Naive thymus-derived CD4-positive, alpha-beta T cell (primary cell): ENCODE measurements at regions of chr10 and their contacts with region 1.

Region 1: DNA sequence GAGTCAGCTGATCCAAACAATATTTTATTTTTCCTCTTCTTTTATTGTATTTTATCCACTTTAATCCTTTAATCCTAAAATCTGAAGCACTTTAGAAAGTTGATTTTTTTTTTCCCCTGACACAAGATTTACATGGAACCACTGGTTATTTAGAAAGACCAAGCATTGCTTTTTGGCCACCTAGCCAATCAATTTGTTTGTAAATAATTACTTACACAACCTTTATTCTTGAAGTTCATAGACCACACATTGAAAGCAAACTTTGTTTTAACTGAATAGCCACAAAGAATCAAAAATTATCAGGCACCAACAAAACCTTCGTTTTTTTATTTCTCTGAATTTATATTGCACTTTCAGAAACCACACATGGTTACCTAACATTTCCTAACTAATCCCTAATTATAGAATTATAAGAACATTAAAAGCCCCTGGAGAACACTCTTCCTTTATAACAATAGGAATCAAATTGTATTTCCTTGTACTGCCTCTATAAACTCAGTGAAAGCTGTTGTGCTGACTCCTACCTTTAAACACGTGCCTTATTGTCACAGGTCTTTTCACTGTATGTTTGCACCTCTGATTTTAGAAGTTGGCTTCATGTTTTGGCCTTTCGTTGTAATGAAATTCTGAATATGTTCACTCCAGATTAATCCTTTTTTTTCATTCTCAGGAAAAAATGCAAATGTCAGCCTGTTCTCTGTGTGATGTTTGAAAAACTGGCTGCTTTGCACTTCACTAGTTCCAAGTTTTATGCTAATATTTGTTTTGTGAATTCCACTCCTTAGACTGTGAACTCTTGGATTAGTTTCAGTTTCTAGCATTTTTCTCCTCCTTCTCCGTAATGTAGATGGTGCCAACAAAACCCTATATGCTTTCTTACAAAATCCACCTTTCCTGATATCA is 1511.9 kb downstream of the REEP3 start:
- DNase-seq: no peak
- ATAC-seq: no peak
- H3K4me3 ChIP-seq: no peak overlapping the region
- H3K4me3 Mint-ChIP-seq: no peak overlapping the region
- H3K27ac ChIP-seq: no peak overlapping the region
- H3K27ac Mint-ChIP-seq: no peak overlapping the region
- H3K4me1 ChIP-seq: no peaks in the 10 kb centered on the region
- H3K4me1 Mint-ChIP-seq: no peaks in the 10 kb centered on the region
- H3K27me3 ChIP-seq: no peaks in the 10 kb centered on the region
- H3K27me3 Mint-ChIP-seq: no peaks in the 10 kb centered on the region

Region 2: DNA sequence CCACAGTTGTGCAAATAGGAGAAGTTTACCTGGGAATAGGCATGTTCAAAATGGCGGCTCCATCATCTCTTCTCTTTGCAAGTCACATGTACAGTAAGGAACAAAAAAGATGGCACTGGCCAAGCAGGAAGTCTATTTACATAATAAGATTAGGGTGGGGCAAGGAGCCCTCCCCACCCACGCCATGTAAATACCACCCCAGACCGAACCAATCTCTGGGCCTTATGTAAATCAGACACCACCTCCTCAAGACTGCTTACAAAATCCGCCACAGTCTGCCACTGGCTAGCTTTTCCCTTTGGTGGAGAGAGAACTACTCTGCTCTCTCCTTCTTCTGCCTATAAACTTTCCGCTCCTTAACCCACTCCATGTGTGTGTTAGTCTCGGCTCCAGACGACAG is 15.6 kb before region 1 on chr10:
- CTCF ChIA-PET with region 1: no interaction called
- POLR2A ChIA-PET with region 1: no interaction called
- intact Hi-C with region 1: no loop called
- DNase-seq: no peak
- ATAC-seq: no peak
- H3K4me3 ChIP-seq: no peak overlapping the region
- H3K4me3 Mint-ChIP-seq: no peak overlapping the region
- H3K27ac ChIP-seq: no peak overlapping the region
- H3K27ac Mint-ChIP-seq: no peak overlapping the region
- H3K4me1 ChIP-seq: no peaks in the 10 kb centered on the region
- H3K4me1 Mint-ChIP-seq: no peaks in the 10 kb centered on the region
- H3K27me3 ChIP-seq: no peaks in the 10 kb centered on the region
- H3K27me3 Mint-ChIP-seq: no peaks in the 10 kb centered on the region

Region 3: DNA sequence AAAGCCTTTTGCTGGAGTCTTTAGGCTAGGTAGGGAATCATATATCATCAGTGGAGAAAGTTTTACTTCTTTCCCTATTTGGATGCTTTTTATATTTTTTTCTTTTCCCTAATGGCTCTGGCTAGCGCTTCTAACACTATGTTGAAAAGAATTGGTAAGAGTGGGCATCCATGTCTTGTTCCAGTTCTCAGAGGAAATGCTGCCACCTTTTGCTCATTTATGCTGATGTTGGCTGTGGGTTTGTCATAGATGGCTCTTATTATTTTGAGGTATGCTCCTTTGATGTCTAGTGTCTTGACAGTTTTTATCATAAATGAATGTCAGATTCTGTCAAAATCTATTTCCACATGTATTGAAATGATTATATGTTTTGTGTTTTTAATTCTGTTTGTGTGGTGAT is 32.2 kb after region 1 on chr10:
- CTCF ChIA-PET with region 1: no interaction called
- POLR2A ChIA-PET with region 1: no interaction called
- intact Hi-C with region 1: loop called in 1 of 2 experiments (anchors 1 kb)
- DNase-seq: no peak
- ATAC-seq: no peak
- H3K4me3 ChIP-seq: no peak overlapping the region
- H3K4me3 Mint-ChIP-seq: no peak overlapping the region
- H3K27ac ChIP-seq: no peak overlapping the region
- H3K27ac Mint-ChIP-seq: no peak overlapping the region
- H3K4me1 ChIP-seq: no peaks in the 10 kb centered on the region
- H3K4me1 Mint-ChIP-seq: no peaks in the 10 kb centered on the region
- H3K27me3 ChIP-seq: no peaks in the 10 kb centered on the region
- H3K27me3 Mint-ChIP-seq: no peaks in the 10 kb centered on the region